GM10248 (cell line): ENCODE measurements at regions of chr2 and their contacts with region 1.

Region 1: DNA sequence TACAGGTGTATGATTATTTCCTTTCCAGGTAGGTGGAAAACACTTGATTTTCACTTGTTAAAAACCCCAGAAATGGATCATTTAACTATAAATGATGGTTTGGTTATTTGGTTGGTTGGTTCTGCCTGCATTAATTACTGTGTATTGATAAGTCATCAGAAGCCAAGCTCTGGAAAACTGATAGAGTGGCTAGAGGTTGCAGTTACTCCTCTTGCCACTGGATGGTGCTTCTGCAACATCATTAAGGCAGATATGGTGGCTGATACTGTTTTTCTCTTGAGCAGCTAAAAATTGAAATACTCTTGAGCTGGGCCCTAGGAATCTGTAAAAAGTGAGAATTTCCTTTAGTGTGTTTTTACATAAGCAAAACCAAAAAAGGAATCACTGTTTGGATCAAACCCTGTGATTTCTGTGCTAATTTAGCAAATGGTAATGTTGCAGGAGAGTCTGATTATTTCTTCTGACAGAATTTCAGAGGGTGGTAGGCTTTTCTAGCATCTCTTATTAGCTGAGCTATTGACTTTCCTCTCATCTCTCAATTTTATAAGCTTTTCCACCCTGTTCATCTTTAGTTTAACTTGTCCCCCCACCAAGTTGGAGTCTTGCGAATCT is 54.3 kb downstream of the RAB10 start:
- DNase-seq: peak; percentile 46
- CTCF ChIP-seq: peak; percentile 62

Region 2: GRCh38 chr2:25794544-25795276 is 293.4 kb before region 1 on chr2:
- CTCF ChIA-PET with region 1: no interaction called
- POLR2A ChIA-PET with region 1: no interaction called
- DNase-seq: peak; percentile 55
- CTCF ChIP-seq: no peak

Region 3: DNA sequence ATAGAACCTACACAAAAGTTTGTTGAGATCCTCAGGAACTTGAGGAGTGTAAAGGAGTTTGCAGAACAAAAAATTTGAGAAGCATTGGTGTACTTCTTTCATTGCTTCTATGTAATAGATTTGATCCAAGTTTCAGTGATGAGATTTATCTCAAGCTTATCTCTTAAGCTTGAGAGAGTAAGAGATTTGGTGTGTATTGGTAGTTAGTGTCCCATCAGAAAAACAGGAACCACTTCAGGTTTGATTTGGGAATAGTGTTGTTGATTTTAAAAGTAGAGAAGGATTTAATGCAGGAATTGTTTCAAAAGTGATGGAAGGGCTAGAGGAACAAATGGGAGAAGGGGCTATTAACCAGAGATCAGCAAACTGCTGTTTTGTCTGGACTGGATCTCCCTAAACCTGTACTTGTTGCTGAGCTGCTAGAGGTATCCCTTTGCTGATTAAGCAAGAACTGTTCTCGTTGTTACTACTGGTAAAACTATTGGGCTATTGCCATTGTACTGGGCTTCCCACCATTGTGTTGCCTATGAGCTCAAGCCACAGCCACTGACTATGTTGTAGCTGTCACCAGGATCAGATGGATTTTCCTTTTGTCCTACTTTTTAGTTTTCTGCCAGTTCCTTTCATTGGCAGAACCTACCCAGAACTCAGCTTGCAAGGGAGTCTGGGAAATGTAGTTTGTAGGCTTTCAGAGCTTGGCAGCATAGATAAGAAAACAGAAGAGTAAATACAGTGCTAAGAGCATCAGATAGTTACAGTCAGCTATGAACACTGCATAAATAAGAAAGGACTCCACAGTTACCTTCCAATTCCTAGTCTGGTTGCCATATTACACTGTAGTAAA is 15.0 kb before region 1 on chr2:
- CTCF ChIA-PET with region 1: interaction called, 27 read pairs
- POLR2A ChIA-PET with region 1: no interaction called
- DNase-seq: no peak
- CTCF ChIP-seq: no peak

Region 4: GRCh38 chr2:26099933-26100332 is 11.8 kb after region 1 on chr2:
- CTCF ChIA-PET with region 1: interaction called, 10 read pairs
- POLR2A ChIA-PET with region 1: no interaction called
- DNase-seq: no peak
- CTCF ChIP-seq: no peak

Region 5: DNA sequence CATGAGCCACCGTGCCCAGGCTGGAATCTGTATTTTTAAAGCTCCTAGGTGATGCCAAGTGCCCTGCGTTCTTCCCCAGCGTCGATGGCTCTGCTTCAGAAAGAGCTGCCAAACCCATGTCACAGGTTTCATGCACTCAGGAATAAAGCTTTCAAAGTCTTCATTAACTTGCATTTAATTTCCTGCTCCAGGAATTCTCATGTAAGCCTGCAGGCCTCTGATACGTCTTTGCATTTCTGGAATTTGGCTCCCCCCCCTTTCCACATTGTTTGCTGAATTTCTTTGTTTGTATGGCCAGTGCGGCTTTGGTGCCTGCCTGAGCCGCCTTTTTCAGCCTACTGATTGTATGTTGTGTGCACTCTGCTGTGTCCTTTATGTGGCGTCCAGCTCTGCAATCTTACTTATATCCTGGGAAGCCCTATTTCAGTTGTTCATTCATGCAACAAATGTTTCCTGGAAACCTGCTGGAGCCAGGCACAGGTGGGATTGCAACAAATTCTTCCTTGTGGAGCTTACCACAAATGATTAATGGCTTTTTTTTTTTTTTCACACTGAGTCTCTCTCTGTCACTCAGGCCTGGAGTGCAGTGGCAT is 407.7 kb after region 1 on chr2:
- CTCF ChIA-PET with region 1: no interaction called
- POLR2A ChIA-PET with region 1: no interaction called
- DNase-seq: no peak
- CTCF ChIP-seq: no peak